ENCODE measurements at regions of chr18 and their contacts with region 1.

Region 1: DNA sequence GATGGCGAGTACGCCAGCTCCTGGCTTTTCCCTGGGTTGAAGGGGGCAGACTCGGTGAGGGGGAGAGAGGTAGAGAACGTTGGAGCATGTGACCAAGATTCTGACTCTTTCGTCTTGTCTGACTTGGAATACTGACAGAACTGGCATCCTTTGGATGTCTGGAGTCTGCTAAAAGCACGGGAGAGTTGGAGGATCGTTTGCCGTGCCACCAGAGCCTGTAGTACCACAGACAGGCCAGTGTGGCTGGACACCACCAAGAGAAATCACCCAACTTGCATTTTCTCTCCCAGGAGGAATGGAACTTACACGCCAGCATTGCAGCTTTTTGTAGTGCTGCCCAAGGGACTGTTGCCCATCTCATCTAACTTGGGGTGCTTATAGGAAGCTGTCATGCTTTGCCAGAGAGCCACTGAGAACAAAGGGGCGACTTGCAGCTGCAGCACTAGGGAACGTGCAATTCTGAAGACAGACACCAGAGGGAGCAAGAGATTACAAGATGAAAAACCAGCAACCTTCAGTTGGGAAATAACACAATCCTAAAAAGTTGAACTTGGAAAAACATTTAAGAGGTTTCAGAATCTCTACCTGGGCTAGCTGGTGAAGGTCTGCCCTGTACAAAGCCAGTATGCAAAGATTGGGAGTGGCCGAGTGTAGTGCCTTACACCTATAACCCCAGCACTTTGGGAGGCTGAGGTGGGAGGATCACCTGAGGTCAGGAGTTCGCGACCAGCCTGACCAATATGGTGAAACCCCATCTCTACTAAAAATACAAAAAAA is 24.1 kb downstream of the PSMG2 start:
- DNase-seq: peak; percentile 68 to 82
- H3K4me3 ChIP-seq: no peak overlapping the region
- H3K4me3 Mint-ChIP-seq: no peak overlapping the region
- H3K27ac Mint-ChIP-seq: peak overlapping the region; percentile 82
- H3K4me1 ChIP-seq: peaks cover 27% of the 10 kb centered on the region
- H3K4me1 Mint-ChIP-seq: peaks cover 16% of the 10 kb centered on the region
- H3K27me3 ChIP-seq: no peaks in the 10 kb centered on the region
- H3K27me3 Mint-ChIP-seq: no peaks in the 10 kb centered on the region
- CTCF ChIP-seq: peak; percentile 85 to 94

Region 2: GRCh38 chr18:12744103-12744502 is 17.1 kb after region 1 on chr18:
- CTCF ChIA-PET with region 1: no interaction called
- POLR2A ChIA-PET with region 1: no interaction called
- intact Hi-C with region 1: loop called (anchors 2 kb)
- DNase-seq: peak in 1 of 2 experiments; percentile 38
- H3K4me3 ChIP-seq: no peak overlapping the region
- H3K4me3 Mint-ChIP-seq: no peak overlapping the region
- H3K27ac Mint-ChIP-seq: no peak overlapping the region
- H3K4me1 ChIP-seq: peaks cover 8% of the 10 kb centered on the region; the same call in 1 of the 2 replicates
- H3K4me1 Mint-ChIP-seq: no peaks in the 10 kb centered on the region
- H3K27me3 ChIP-seq: no peaks in the 10 kb centered on the region
- H3K27me3 Mint-ChIP-seq: no peaks in the 10 kb centered on the region
- CTCF ChIP-seq: peak; percentile 31 to 49

Region 3: GRCh38 chr18:12754511-12754910 is 27.5 kb after region 1 on chr18:
- CTCF ChIA-PET with region 1: no interaction called
- POLR2A ChIA-PET with region 1: no interaction called
- intact Hi-C with region 1: no loop called
- DNase-seq: no peak
- H3K4me3 ChIP-seq: no peak overlapping the region
- H3K4me3 Mint-ChIP-seq: no peak overlapping the region
- H3K27ac Mint-ChIP-seq: no peak overlapping the region
- H3K4me1 ChIP-seq: no peaks in the 10 kb centered on the region
- H3K4me1 Mint-ChIP-seq: no peaks in the 10 kb centered on the region
- H3K27me3 ChIP-seq: no peaks in the 10 kb centered on the region
- H3K27me3 Mint-ChIP-seq: no peaks in the 10 kb centered on the region
- CTCF ChIP-seq: no peak

Region 4: DNA sequence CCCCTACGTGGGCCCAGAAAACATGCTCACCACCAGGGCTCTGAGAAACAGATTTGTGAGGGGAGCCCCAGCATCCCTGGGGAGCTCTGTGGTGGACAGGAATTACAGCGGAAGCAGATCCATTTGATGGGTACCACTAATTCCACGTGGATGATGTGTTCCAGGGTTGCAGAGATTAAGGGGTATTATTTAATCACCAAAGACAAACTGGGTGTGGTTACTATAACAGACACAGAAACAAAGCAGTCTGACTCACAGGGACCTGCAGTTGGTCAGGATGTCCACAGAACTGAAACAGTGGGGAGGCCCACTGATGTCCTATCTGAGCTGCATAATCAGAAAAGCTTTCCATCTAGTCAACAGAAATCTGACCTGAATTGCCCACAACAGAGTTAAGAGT is 41.7 kb after region 1 on chr18:
- CTCF ChIA-PET with region 1: interaction called, 8 read pairs
- POLR2A ChIA-PET with region 1: interaction called, 7 read pairs
- intact Hi-C with region 1: loop called (anchors 2 kb)
- DNase-seq: no peak
- H3K4me3 ChIP-seq: no peak overlapping the region
- H3K4me3 Mint-ChIP-seq: no peak overlapping the region
- H3K27ac Mint-ChIP-seq: no peak overlapping the region
- H3K4me1 ChIP-seq: peaks cover 23% of the 10 kb centered on the region
- H3K4me1 Mint-ChIP-seq: peaks cover 9% of the 10 kb centered on the region
- H3K27me3 ChIP-seq: no peaks in the 10 kb centered on the region
- H3K27me3 Mint-ChIP-seq: no peaks in the 10 kb centered on the region
- CTCF ChIP-seq: no peak

Region 5: GRCh38 chr18:12820506-12820905 is 93.5 kb after region 1 on chr18:
- CTCF ChIA-PET with region 1: no interaction called
- POLR2A ChIA-PET with region 1: no interaction called
- intact Hi-C with region 1: no loop called
- DNase-seq: no peak
- H3K4me3 ChIP-seq: no peak overlapping the region
- H3K4me3 Mint-ChIP-seq: no peak overlapping the region
- H3K27ac Mint-ChIP-seq: no peak overlapping the region
- H3K4me1 ChIP-seq: peaks cover 4% of the 10 kb centered on the region; the same call in 1 of the 2 replicates
- H3K4me1 Mint-ChIP-seq: no peaks in the 10 kb centered on the region
- H3K27me3 ChIP-seq: no peaks in the 10 kb centered on the region
- H3K27me3 Mint-ChIP-seq: no peaks in the 10 kb centered on the region
- CTCF ChIP-seq: no peak

Region 6: DNA sequence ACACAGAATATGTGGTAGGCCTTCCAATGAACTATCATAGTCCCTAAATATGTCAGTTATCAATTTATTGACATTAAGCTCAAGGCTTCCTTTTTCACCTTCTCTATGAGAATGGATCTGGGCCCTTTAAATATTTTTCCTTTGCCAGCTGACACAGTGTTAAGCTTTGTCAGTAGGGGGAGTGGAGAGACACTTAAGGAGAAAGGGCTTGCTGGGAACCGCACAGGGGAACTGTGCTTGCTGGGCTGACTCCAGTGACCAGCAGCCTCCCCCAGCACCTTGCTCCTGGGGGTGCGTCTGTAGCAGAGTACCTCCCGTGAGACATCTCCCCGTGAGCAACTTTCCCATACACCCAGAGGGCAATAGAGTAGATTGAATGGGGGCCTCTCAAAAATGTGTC is 163.5 kb after region 1 on chr18:
- CTCF ChIA-PET with region 1: interaction called, 4 read pairs
- POLR2A ChIA-PET with region 1: no interaction called
- intact Hi-C with region 1: loop called (anchors 2 kb)
- DNase-seq: peak in 1 of 2 experiments; percentile 46
- H3K4me3 ChIP-seq: no peak overlapping the region
- H3K4me3 Mint-ChIP-seq: no peak overlapping the region
- H3K27ac Mint-ChIP-seq: no peak overlapping the region
- H3K4me1 ChIP-seq: no peaks in the 10 kb centered on the region
- H3K4me1 Mint-ChIP-seq: peaks cover 8% of the 10 kb centered on the region
- H3K27me3 ChIP-seq: no peaks in the 10 kb centered on the region
- H3K27me3 Mint-ChIP-seq: no peaks in the 10 kb centered on the region
- CTCF ChIP-seq: peak; percentile 32 to 57

Region 7: DNA sequence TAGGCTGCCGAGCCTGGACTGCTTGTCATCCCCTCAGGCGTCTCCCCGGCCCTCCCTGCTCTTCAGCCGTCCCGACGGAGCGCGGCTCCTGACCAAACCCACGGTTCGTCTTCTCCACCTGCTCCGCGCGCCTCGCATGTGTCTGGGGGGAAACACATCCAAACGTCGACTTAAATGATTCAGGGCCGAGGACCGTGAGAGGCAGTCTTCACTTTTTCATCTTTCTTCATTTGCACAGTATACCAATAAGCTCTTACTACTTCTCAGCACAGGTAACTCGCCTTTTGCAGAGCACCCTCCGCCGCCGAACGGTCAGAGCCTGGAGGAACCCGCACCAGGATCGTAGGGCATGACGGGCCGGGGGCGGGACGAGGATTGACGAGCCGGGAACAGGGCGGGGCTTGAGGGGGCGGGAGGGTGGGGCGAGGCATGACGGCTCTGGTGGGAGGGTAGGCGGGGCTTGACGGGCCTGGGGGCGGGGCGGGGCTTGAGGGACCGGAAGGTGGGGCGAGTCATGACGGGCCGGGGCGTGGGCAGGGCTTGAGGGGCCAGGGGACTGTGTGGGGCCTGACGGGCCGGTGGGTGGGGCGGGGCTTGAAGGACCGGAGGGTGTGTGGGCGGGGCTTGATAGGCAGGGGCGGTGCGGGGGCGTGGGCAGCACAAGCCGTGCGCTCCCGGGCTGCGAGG is 220.5 kb after region 1 on chr18 and contains the start of gene SEH1L:
- CTCF ChIA-PET with region 1: no interaction called
- POLR2A ChIA-PET with region 1: interaction called, 7 read pairs
- intact Hi-C with region 1: loop called (anchors 5 kb)
- DNase-seq: peak; percentile 99
- H3K4me3 ChIP-seq: peak within 1 kb of the TSS; percentile 84
- H3K4me3 Mint-ChIP-seq: peak within 1 kb of the TSS; percentile 100
- H3K27ac Mint-ChIP-seq: peak within 1 kb of the TSS; percentile 100
- H3K4me1 ChIP-seq: peaks cover 19% of the 10 kb centered on the region
- H3K4me1 Mint-ChIP-seq: peaks cover 11% of the 10 kb centered on the region
- H3K27me3 ChIP-seq: no peaks in the 10 kb centered on the region
- H3K27me3 Mint-ChIP-seq: no peaks in the 10 kb centered on the region
- CTCF ChIP-seq: no peak
- total RNA-seq, gene SEH1L: 116 and 118 TPM in 2 replicates